ENCODE measurements at regions of chr7 and their contacts with region 1.

Region 1: GRCh38 chr7:22885797-22886261 is 63.2 kb upstream of the TOMM7 start:
- DNase-seq: peak; percentile 60
- H3K4me3 Mint-ChIP-seq: peak overlapping the region; percentile 59
- H3K27ac Mint-ChIP-seq: peak overlapping the region; percentile 93
- H3K4me1 Mint-ChIP-seq: peaks cover 41% of the 10 kb centered on the region
- H3K27me3 Mint-ChIP-seq: no peaks in the 10 kb centered on the region

Region 2: DNA sequence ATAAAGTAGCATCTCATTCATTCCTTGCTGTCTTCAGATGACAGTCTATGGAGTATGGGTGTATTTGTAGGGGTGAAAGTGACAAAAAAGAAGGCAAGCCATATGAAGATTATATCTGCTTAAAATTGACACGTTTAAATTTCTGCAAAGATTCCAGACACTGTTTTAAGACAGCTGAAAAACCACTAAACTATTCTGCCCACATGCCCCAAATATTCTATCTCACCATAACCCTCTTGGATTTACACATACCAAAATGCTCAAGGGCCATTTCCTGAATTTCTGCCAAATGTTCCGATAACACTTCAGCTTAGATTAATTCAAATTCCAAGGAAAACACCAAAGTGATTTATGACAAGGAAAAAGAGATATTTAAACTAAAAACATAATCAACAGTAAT is 258.7 kb before region 1 on chr7:
- intact Hi-C with region 1: no loop called
- DNase-seq: no peak
- H3K4me3 Mint-ChIP-seq: no peak overlapping the region
- H3K27ac Mint-ChIP-seq: no peak overlapping the region
- H3K4me1 Mint-ChIP-seq: peaks cover 3% of the 10 kb centered on the region
- H3K27me3 Mint-ChIP-seq: peaks cover 31% of the 10 kb centered on the region

Region 3: DNA sequence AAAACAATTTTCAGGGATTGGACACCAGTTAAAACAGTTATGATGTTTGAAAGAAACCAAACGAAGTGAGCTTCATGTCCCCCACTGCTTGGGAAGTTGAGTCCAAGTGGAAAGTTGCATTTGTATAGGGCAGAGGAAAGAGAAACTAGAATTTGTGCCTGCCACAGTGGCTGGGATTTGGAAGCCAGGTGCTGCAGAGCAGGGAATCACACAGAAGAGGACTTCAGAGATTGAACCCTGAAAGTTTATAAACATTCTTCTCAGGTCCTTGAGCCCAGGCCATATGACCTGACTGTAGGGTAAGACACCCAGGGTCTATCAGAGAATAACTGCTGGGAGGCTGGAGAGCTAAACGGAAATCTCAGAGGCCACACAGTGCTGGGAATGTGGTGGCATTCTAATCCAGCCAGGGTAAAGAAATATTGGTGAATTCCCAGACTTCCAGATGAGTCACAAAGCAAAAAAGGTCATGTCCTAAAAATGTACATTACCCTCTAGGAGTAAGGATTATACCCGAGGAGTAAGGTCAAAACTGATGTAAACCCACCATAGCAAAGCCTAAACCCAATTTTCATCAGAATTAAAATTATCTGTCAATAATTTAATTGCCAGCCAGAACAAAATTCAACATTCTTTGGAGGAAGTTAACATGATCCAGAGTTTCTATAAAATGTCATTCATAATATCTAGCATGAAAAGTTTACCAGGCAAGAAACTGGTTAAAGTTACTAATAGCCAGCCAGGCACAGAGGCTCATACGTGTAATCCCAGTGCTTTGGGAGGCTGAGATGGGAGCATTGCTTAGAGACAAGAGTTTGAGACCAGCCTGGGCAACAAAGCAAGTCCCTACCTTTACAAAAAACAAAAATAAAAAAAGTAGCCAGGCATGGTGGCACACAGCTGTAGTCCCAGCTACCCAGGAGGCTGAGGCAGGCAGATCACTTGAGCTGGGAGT is 94.3 kb before region 1 on chr7:
- intact Hi-C with region 1: no loop called
- DNase-seq: no peak
- H3K4me3 Mint-ChIP-seq: no peak overlapping the region
- H3K27ac Mint-ChIP-seq: no peak overlapping the region
- H3K4me1 Mint-ChIP-seq: no peaks in the 10 kb centered on the region
- H3K27me3 Mint-ChIP-seq: peaks cover 11% of the 10 kb centered on the region

Region 4: GRCh38 chr7:22822486-22823141 is 63.2 kb before region 1 on chr7 and contains the start of gene TOMM7:
- intact Hi-C with region 1: loop called (anchors 1 kb)
- DNase-seq: peak; percentile 81
- H3K4me3 Mint-ChIP-seq: peak within 1 kb of the TSS; percentile 98
- H3K27ac Mint-ChIP-seq: peak within 1 kb of the TSS; percentile 93
- H3K4me1 Mint-ChIP-seq: peaks cover 41% of the 10 kb centered on the region
- H3K27me3 Mint-ChIP-seq: peaks cover 17% of the 10 kb centered on the region
- total RNA-seq, gene TOMM7: 187 and 225 TPM in 2 replicates

Region 5: DNA sequence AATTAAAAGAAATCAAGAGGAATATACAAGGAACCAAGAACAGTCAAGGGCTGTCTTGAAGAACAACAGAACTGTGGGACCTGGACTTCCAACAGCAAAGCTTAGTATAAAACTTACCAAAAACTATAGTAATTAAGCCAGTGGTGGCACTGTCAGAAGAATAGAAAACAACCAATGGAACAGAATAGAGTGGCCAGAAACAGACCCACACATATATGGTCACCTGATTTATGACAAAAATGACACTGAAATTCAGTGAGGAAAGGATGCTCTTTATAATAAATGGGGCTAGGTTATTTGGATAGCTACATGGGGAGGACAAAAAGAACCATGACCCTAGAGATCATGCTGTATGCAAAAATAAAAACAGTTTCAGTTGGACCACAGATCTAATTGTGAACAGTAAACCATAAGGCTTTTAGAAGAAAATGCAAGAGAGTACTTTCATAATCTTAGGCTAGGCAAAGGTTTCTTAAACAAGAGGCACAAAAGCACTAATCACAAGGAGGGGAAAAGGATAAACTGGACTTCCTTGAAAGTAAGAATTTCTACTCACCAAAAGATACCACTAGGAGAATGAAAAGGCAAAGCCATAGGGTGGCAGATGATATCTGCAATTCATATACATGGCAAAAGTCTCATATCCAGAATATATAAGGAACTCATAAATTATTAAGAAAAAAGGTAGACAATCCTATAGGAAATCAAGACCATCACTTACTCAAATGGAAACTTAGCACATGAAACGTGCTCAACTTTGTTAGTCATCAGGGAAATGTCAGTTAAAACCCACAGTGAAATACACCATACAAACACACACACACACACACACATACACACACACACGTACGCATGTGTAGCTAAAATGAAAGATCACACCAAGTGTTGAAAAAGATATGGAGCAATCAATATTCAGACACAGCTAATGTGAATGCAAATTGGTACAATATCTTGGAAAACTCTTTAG is 107.3 kb after region 1 on chr7:
- intact Hi-C with region 1: loop called (anchors 2 kb)
- DNase-seq: no peak
- H3K4me3 Mint-ChIP-seq: peak overlapping the region; percentile 43
- H3K27ac Mint-ChIP-seq: peak overlapping the region; percentile 77
- H3K4me1 Mint-ChIP-seq: peaks cover 52% of the 10 kb centered on the region
- H3K27me3 Mint-ChIP-seq: no peaks in the 10 kb centered on the region

Region 6: GRCh38 chr7:23072048-23072447 is 186.2 kb after region 1 on chr7:
- intact Hi-C with region 1: no loop called
- DNase-seq: no peak
- H3K4me3 Mint-ChIP-seq: no peak overlapping the region
- H3K27ac Mint-ChIP-seq: no peak overlapping the region
- H3K4me1 Mint-ChIP-seq: no peaks in the 10 kb centered on the region
- H3K27me3 Mint-ChIP-seq: peaks cover 15% of the 10 kb centered on the region